ENCODE measurements at regions of chr16 and their contacts with region 1.

Region 1: GRCh38 chr16:4506450-4506849 is 30.3 kb downstream of the HMOX2 start:
- DNase-seq: peak; percentile 75
- ATAC-seq: peak; percentile 72
- H3K4me3 Mint-ChIP-seq: no peak overlapping the region
- H3K27ac Mint-ChIP-seq: peak overlapping the region; percentile 81
- H3K4me1 Mint-ChIP-seq: peaks cover 48% of the 10 kb centered on the region
- H3K27me3 Mint-ChIP-seq: no peaks in the 10 kb centered on the region

Region 2: DNA sequence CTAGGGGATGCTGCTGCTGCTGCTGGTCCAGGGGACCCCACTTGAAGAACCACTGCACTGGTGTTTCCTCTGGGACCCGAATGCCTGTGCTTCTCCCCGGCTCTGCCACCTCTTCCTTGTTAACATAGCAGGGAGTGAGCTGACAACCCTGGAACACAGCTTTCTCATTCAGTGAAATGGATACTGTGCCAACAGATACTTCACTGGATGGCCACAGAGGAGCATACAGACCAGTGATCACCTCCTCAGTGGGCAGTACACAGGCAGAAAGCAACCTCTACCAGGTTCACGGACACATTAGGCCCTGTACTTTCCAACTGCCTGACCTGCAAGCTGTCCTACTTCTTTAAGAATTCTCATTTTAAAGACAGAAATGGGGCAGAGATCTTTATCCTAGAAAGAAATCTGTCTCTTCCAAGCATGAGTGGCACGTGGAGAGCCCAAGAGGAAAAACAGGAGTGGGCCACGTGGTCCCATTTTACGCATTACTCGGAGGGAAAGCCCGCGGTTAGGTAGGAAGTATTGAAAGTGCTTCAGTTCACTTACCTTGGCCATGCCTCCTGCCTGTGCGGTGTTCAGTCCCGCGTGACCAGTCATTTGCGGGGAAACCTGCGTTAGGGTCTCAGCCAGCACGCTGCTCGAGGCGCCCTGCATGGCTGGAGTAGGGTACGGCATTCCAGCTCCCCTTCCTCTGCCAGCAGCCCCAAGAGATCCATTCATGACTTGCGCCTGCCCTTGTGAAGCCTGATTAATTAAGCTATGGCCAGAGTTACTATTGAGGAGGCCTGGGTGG is 656.5 kb before region 1 on chr16:
- CTCF ChIA-PET with region 1: no interaction called
- POLR2A ChIA-PET with region 1: no interaction called
- intact Hi-C with region 1: no loop called
- DNase-seq: no peak
- ATAC-seq: no peak
- H3K4me3 Mint-ChIP-seq: no peak overlapping the region
- H3K27ac Mint-ChIP-seq: no peak overlapping the region
- H3K4me1 Mint-ChIP-seq: peaks cover 42% of the 10 kb centered on the region
- H3K27me3 Mint-ChIP-seq: no peaks in the 10 kb centered on the region

Region 3: DNA sequence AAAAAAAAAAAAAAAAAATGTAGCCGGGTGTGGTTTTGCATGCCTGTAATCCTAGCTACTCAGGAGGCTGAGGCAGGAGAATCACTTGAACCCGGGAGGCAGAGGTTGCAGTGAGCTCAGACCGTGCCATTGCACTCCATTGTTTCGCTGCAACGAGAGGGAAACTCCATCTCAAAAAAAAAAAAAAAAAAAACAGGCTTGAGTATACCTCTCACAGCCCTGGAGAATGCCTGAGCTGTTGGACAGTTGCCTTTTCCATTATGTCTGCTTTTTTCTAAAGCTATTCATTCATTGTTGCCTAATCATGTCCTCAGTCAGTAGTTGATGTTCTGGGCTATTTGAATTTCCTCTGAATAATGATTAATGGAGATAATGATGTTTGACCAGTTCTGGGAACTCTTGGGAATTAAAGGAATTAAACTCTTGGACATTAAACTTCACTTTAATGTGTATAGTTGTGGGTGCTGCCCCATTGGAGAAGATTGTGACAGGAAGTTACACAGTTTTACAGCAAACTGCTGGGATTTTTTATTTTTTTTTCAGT is 18.4 kb before region 1 on chr16:
- CTCF ChIA-PET with region 1: interaction called, 32 read pairs
- POLR2A ChIA-PET with region 1: interaction called, 3 read pairs
- intact Hi-C with region 1: no loop called
- DNase-seq: no peak
- ATAC-seq: peak; percentile 59
- H3K4me3 Mint-ChIP-seq: peak overlapping the region; percentile 2
- H3K27ac Mint-ChIP-seq: peak overlapping the region; percentile 92
- H3K4me1 Mint-ChIP-seq: peaks cover 56% of the 10 kb centered on the region
- H3K27me3 Mint-ChIP-seq: no peaks in the 10 kb centered on the region

Region 4: GRCh38 chr16:4529085-4530060 is 22.9 kb after region 1 on chr16:
- CTCF ChIA-PET with region 1: interaction called, 23 read pairs
- POLR2A ChIA-PET with region 1: interaction called, 3 read pairs
- intact Hi-C with region 1: no loop called
- DNase-seq: peak; percentile 59
- ATAC-seq: peak; percentile 87
- H3K4me3 Mint-ChIP-seq: peak overlapping the region; percentile 34
- H3K27ac Mint-ChIP-seq: peak overlapping the region; percentile 98
- H3K4me1 Mint-ChIP-seq: peaks cover 49% of the 10 kb centered on the region
- H3K27me3 Mint-ChIP-seq: no peaks in the 10 kb centered on the region

Region 5: DNA sequence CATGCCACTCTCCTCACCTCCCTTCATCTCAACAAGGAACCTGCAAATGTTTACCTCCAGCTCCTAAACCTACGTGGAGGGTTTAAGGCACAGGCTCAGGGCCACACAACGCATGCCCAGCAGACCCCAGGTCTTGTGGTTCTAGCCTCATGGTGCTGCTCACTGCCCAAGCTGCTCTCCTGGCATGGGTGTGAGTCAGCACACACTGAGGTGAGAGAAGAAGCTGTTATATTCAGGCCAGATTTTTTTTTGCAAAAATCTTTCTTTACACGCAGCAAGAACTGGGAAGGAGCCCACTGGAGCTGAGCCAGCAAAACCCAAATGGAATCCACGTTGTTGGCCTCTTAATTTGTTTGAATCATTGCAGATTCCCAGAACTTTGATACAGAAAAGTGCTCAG is 44.1 kb after region 1 on chr16:
- CTCF ChIA-PET with region 1: interaction called, 77 read pairs
- POLR2A ChIA-PET with region 1: interaction called, 3 read pairs
- intact Hi-C with region 1: loop called (anchors 1 kb)
- DNase-seq: no peak
- ATAC-seq: no peak
- H3K4me3 Mint-ChIP-seq: no peak overlapping the region
- H3K27ac Mint-ChIP-seq: no peak overlapping the region
- H3K4me1 Mint-ChIP-seq: peaks cover 7% of the 10 kb centered on the region
- H3K27me3 Mint-ChIP-seq: no peaks in the 10 kb centered on the region

Region 6: GRCh38 chr16:4586291-4586690 is 79.8 kb after region 1 on chr16:
- CTCF ChIA-PET with region 1: interaction called, 44 read pairs
- POLR2A ChIA-PET with region 1: interaction called, 4 read pairs
- intact Hi-C with region 1: loop called (anchors 1 kb)
- DNase-seq: no peak
- ATAC-seq: no peak
- H3K4me3 Mint-ChIP-seq: no peak overlapping the region
- H3K27ac Mint-ChIP-seq: no peak overlapping the region
- H3K4me1 Mint-ChIP-seq: peaks cover 3% of the 10 kb centered on the region
- H3K27me3 Mint-ChIP-seq: peaks cover 3% of the 10 kb centered on the region

Measured in activated CD4-positive, alpha-beta T cell treated with anti-CD3 and anti-CD28 coated beads for 36 hours (primary cell).